ENCODE measurements at regions of chr5 and their contacts with region 1.

Region 1: DNA sequence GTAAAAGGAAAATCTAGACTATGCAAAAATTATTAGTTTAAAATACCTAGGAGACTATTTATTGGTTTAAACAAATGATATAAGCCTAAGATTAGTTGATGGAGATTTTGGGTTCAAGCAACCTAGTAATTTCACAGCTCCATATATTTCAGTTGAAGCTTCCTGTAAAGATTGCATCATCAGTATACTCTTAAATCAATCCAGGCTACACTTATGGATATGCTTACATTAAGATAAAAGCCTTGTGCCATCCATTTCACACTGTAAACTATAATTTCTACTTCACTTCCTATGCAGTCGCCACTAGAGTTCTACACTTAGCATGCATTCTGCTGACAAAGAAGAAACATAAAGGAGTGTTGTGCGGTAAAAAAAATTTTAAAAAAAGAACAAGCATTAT is 7.3 kb upstream of the LIX1 start:
- DNase-seq: no peak
- ATAC-seq: no peak
- H3K4me3 ChIP-seq: no peak overlapping the region
- H3K27ac ChIP-seq: no peak overlapping the region
- H3K4me1 ChIP-seq: no peaks in the 10 kb centered on the region
- H3K27me3 ChIP-seq: no peaks in the 10 kb centered on the region
- CTCF ChIP-seq: no peak

Region 2: DNA sequence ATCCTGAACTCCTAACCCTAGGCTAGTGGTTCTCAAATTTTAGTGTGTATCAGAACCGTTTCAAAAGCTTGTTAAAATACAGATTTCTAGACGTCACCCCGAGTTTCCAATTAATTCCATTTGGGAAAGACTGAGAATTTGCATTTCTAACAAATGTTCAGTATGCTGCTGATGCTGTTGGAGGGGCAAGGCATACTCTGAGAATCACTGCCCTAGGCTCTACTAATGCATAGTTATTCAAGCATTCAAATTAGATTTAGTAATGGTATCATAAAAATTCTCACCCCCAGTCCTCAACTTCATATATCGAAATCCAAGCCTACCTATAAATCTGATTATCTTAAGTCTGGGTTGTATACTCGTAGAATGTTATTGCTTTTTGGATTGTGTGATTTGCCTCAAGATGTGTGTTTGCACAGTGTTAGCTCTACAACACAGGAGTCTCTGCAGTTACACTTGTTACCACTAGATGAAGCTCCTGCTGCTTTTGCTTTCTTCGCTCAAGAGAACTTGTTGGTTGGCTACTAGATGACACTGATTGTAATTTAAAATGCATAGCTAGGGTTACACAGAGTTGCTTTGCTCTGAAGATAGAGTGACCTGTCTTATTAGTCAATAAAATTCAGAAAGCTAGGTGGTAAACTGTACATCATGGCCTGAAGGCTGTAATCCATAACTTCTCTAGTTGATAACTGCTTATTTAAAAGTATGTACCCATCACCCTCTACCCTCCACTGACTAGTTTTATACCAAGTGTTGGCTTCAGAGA is 280.9 kb before region 1 on chr5:
- intact Hi-C with region 1: loop called in 2 of 3 experiments (anchors 10 kb)
- DNase-seq: peak in 2 of 6 donors; percentile 11 to 33
- ATAC-seq: peak; percentile 88 to 99 (median 97)
- H3K4me3 ChIP-seq: no peak overlapping the region
- H3K27ac ChIP-seq: no peak overlapping the region
- H3K4me1 ChIP-seq: no peaks in the 10 kb centered on the region
- H3K27me3 ChIP-seq: no peaks in the 10 kb centered on the region
- CTCF ChIP-seq: peak; percentile 57 to 91 (median 84)

Region 3: DNA sequence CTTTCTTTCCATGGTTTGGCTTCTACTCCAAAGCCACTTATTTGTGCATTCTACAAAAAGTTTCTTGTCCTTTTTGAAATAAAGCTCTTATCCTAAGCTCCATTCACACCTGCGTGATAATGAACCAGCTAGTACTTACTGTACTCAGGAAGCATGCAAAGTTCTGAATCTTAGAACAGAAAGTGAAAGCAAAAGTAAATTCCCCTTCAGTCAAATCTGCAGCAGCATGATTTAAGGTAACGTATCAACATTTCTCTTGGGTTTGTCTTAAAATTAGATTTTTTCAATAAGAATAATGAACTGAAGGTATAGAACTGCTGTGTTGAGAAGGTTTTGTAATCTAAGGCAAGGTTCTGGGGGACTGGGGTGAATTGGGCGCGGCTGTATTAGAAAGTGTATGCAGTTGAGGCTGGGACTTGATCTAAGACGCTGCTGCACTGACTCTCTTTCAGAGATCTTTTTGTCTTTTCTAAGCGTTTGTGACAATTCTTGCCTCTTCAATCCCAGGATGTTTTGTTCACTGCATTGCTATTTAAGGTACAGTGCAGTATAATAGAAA is 273.3 kb before region 1 on chr5 and contains the start of gene ERAP2:
- intact Hi-C with region 1: loop called in 1 of 3 experiments (anchors 10 kb)
- DNase-seq: no peak
- ATAC-seq: peak; percentile 70 to 92 (median 88)
- H3K4me3 ChIP-seq: peak within 1 kb of the TSS; percentile 36 to 57 (median 50)
- H3K27ac ChIP-seq: peak within 1 kb of the TSS in 3 of 4 donors; percentile 46 to 60 (median 54)
- H3K4me1 ChIP-seq: peaks cover 0 to 5% (median 0%) of the 10 kb centered on the region in 3 donors
- H3K27me3 ChIP-seq: no peaks in the 10 kb centered on the region
- CTCF ChIP-seq: no peak
- total RNA-seq, gene ERAP2: 0.22 to 9.3 (median 2.5) TPM